ENCODE measurements at regions of chr2 and their contacts with region 1.

Region 1: DNA sequence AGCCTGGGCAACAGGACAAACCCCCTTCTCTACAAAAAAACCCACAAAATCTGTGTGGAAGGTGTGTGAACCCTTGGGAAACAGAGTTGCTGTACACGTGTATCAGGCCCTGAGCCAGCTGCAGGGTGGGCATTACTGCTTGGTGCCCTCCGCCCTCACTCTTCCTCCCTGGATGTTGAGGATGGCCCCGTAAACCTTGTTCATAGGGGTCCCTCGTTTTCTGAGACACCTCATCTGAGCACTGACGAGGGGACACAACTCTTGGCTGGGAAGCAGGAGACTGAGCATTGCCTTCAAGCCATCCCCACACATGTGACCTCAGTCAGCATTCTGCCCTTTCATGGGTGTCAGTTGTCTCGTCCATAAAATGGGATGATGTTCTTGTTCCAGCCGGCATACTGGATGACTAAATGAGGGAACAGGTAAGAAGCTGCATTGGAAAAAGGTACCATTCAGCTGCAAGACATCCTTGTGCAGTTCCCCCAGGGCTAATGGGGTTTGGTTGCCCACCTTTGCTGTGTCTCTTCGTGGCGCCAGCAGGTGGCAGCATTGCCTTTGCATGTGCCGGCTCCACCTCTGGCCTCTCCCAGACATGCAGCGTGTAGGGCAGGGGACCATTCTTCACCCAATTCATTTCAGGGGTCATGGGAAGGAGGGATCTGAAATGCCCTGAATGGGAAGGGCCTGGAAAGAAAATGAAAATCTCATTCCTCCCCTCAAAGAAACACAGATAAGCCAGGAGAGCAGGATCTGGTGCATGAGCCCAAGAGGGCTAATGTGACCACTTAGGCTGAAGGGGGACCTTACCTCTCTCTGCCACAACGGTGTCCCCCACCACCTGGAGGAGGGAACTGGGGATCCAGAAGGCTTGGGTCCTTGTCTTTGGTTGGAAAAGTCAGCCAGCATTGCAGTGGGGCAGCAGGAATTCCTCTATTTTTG is 36.4 kb upstream of the HAAO start:
- DNase-seq: peak; percentile 93

Region 2: DNA sequence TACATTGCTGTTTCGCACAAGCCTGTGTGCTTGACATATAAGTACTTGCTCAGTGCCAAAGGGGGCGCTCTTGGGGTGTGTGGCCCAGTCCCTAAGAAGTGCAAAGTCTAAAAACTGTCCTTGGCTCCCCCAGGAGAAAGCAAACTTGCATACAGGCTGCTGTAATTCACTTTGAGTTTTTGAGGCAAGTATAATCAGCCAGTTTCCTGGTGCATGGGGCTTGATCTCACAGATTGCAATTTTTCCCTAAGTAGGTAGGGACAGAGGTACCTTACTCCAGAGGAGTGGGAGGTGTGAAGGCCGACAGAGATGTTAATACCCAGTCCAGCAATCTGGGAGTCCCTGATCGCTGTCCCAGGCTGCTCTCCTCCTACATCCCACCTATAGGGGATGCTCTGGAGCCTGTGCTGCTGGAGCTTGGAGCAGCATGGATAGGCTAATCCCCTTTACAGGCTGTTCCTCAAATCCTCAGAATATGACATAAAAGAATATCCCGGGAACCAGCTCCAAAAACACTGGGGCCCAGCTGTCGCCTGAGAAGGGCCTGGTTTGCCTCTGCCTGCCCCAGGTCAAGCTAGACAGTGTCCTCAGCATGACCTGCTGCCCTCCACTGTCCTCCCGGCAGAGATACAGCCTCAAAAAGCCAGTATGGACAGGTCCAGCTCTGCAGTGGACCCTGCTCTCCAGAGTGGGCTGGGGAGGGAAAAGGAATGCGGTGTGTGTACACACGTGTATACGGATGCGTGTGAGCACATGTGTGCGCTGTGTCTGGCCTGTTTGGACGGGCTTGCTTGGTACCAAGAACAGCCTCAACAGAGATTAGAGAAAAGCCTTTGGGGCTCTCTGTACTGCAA is 100.2 kb after region 1 on chr2:
- intact Hi-C with region 1: loop called in 1 of 2 experiments (anchors 5 kb)
- DNase-seq: no peak

Region 3: DNA sequence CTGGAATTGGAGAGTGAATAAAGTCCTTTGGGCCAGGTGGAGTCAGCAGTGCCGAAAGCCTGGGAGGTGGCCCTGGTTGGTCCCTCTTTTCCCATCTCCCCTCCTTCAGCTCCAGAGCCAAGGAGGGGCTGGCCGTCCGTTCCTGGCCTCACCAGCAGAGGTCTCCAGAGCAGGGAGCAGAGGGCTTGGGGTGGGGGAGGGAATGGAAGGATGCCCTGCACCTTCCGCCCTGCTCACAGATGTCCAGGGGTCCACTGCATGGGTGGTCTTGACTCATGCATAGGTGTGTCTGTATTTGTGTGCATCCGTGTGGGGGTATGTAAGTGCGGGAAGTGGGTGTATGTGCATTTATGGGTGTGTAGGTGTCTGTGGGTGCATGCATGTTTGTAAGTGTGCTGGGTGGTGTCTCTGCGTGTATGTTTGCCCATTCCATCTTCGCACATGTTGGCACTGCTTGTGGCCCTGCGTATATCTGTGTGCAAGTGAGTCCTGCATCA is 195.8 kb after region 1 on chr2:
- intact Hi-C with region 1: loop called in 1 of 2 experiments (anchors 5 kb)
- DNase-seq: peak; percentile 89

Region 4: DNA sequence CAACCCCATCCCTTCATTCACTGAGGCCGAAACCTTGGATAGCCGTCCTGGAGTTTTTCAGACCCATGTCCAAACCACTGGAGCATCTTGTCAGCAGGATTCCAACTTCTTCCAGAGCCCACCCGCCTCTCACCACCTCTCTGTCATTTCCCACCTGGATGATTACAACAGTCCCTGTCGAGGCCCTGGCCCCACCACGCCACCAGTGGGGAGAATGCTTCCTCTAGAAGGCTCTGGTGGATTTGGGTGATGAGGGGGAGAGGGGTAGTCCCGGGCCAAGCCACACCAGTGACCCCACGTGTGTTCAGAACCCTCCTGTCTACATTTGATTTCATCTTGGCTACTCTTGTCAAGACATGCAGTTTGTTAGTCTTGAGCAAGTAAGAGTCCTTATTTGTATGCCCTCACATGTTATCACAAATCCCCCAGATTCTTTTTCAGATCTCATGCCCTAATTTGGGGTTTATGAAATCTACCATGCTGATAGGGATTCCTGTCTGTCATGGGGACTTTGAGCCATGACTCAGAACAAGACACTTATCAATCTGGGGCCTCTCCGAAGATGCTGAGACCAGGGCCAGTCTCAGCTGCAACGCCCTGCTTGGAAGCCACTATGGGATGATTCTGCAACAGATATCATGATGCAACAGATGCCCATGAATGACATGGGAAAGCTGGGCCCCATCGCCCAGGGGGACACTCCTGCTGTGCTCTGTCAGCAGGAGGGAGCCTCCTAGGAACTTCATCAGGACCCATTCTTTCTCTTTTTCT is 211.5 kb after region 1 on chr2:
- intact Hi-C with region 1: no loop called
- DNase-seq: peak; percentile 64

Region 5: DNA sequence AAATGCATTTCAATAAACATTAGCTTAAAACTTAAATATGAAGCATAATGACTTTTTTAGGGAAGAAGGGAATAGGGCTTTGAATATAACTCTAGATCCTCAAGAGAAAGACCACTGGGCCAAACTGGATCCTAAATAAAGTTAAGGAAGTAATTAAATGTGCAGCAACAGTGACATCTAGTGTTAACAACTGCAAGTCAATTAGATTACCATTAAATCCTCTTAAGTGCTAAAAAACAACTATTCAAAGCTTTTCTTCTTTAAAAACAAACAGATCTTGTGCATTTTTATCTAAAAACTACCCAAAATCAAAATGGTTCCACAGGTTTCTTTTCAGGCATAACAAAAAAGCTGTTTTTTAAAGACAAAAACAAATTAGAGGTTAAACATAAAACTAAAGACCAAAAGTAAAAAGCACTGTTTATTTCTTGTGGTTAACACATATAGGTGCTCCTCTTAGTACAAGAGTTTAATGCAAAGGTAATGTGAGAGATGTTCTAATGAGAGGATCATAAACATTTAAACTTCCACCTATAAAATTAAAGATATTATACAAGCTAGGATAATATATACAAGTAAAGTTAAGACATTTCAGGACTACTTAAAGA is 655.7 kb after region 1 on chr2:
- intact Hi-C with region 1: loop called in 1 of 2 experiments (anchors 5 kb)
- DNase-seq: no peak